Activated CD4-positive, alpha-beta memory T cell treated with anti-CD3 and anti-CD28 coated beads for 36 hours (primary cell): ENCODE measurements at regions of chr1 and their contacts with region 1.

Region 1: DNA sequence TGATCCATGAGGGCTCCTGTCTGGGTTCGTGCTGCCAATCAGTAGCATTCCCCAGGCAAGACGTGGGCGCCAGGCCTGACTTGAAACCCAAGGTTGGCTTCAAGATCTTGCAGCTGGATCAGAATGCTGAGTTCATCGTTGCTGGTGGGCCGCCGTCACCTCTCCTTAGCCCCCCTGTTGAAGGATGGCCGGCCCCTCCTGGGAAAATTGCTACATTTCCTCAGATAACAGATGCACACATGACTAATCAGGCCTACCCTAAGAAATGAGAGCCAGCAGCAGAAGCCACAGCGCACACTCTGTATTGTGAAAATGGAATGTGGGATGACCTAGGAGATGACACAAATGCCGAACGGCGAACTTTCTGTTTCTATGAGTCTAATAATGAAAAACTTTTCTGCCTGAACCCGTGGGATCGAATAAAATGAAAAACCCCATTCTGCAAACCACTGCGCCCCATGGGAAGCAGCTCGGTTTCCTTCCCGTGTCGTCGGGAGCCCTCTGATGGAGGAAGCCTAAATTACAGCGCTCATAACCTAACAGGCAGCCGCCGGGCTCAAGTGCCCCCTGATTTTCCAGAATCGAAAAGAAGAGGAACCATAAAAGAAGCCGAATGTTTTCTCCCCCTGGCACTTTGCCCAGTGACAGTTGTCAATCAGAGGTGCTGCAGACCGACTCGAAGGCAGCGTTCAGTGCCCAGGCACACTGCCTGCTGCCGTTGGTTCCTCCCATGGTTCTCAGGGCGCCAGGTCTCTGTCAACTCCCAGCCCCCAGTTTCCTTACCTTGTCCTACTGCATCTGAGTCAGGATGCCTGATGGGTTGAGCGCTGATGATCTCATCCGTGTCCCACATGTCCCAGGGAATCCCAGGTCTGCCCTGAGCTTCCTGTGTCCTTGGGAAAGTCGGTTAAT is 38.2 kb upstream of the H6PD start:
- DNase-seq: peak; percentile 80
- H3K4me3 Mint-ChIP-seq: no peak overlapping the region
- H3K27ac Mint-ChIP-seq: no peak overlapping the region
- H3K4me1 Mint-ChIP-seq: peaks cover 16% of the 10 kb centered on the region
- H3K27me3 Mint-ChIP-seq: peaks cover 50% of the 10 kb centered on the region

Region 2: DNA sequence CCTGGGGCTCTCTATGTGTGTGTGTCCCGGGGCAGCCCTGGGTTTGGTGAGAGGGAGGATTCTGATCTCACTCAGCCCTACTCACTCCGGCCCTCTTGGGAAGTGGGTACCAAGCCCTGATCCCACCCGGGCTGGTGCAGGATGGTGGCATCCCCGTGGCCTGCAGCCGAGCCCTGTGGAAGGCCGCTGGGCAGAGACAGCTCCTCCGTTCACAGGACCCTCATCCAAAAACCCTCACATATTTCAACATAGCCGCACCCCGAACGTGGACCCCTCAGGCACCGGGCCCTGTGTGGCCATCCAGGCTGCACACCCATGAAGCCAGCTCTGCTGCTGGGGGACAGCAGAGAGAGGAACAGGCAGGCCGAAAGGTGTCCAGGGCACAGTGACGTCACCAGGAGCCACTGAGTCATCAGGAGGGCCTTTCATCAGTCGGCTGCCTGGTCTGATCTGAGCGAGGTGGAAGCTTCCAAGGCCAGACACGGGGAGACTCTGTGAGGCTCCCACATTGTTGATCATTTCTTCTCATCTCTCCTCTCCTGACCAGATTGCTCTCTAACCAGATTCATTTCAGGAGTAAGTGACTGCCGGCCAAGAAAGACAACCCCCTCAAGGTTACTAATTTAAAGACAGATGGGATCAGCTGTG is 51.2 kb before region 1 on chr1:
- CTCF ChIA-PET with region 1: interaction called, 26 read pairs
- POLR2A ChIA-PET with region 1: no interaction called
- intact Hi-C with region 1: loop called (anchors 1 kb)
- DNase-seq: peak; percentile 68
- H3K4me3 Mint-ChIP-seq: no peak overlapping the region
- H3K27ac Mint-ChIP-seq: no peak overlapping the region
- H3K4me1 Mint-ChIP-seq: peaks cover 4% of the 10 kb centered on the region
- H3K27me3 Mint-ChIP-seq: no peaks in the 10 kb centered on the region

Region 3: GRCh38 chr1:9161963-9162362 is 34.4 kb before region 1 on chr1:
- CTCF ChIA-PET with region 1: no interaction called
- POLR2A ChIA-PET with region 1: no interaction called
- intact Hi-C with region 1: loop called (anchors 2 kb)
- DNase-seq: no peak
- H3K4me3 Mint-ChIP-seq: no peak overlapping the region
- H3K27ac Mint-ChIP-seq: no peak overlapping the region
- H3K4me1 Mint-ChIP-seq: peaks cover 21% of the 10 kb centered on the region
- H3K27me3 Mint-ChIP-seq: no peaks in the 10 kb centered on the region

Region 4: GRCh38 chr1:9234223-9235095 is 38.1 kb after region 1 on chr1 and contains the start of gene H6PD:
- CTCF ChIA-PET with region 1: interaction called, 4 read pairs
- POLR2A ChIA-PET with region 1: interaction called, 3 read pairs
- intact Hi-C with region 1: loop called (anchors 5 kb)
- DNase-seq: peak; percentile 77
- H3K4me3 Mint-ChIP-seq: peak within 1 kb of the TSS; percentile 86
- H3K27ac Mint-ChIP-seq: peak within 1 kb of the TSS; percentile 88
- H3K4me1 Mint-ChIP-seq: peaks cover 37% of the 10 kb centered on the region
- H3K27me3 Mint-ChIP-seq: no peaks in the 10 kb centered on the region
- total RNA-seq, gene H6PD: 9.3 to 10.4 TPM

Region 5: GRCh38 chr1:9257851-9258250 is 61.5 kb after region 1 on chr1:
- CTCF ChIA-PET with region 1: no interaction called
- POLR2A ChIA-PET with region 1: no interaction called
- intact Hi-C with region 1: no loop called
- DNase-seq: no peak
- H3K4me3 Mint-ChIP-seq: no peak overlapping the region
- H3K27ac Mint-ChIP-seq: no peak overlapping the region
- H3K4me1 Mint-ChIP-seq: peaks cover 7% of the 10 kb centered on the region
- H3K27me3 Mint-ChIP-seq: no peaks in the 10 kb centered on the region